Activated CD4-positive, alpha-beta T cell treated with anti-CD3 and anti-CD28 coated beads for 36 hours (primary cell): ENCODE measurements at regions of chr15 and their contacts with region 1.

Region 1: DNA sequence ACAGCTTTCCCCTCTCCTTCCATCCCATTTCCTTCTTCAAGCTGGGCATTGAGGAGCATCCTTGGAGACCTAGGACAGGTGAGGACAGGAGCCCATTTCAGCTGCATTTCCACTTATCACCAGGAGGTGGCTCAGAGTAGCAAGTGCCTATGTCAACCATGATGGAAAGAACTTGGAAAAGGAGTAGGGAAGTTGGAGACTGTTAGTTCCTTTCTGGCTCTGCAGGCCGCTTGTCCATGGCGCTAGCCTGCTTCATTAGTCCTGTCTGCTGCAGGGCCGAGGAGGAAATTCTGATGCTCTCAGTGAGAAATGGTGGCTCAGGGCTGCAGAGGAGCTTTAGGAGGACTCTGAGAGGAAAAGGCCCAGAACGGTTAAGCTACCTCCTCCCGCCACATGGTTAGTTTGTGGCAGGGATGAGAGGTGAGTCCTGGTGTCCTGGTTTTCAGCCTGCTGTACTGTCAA is 7.0 kb upstream of the CD276 start:
- DNase-seq: peak; percentile 68
- ATAC-seq: peak; percentile 49
- H3K4me3 Mint-ChIP-seq: no peak overlapping the region
- H3K27ac Mint-ChIP-seq: no peak overlapping the region
- H3K4me1 Mint-ChIP-seq: peaks cover 17% of the 10 kb centered on the region
- H3K27me3 Mint-ChIP-seq: peaks cover 33% of the 10 kb centered on the region

Region 2: GRCh38 chr15:73584699-73585420 is 92.3 kb before region 1 on chr15:
- CTCF ChIA-PET with region 1: no interaction called
- POLR2A ChIA-PET with region 1: no interaction called
- intact Hi-C with region 1: no loop called
- DNase-seq: no peak
- ATAC-seq: peak; percentile 29
- H3K4me3 Mint-ChIP-seq: no peak overlapping the region
- H3K27ac Mint-ChIP-seq: peak overlapping the region; percentile 33
- H3K4me1 Mint-ChIP-seq: peaks cover 10% of the 10 kb centered on the region
- H3K27me3 Mint-ChIP-seq: no peaks in the 10 kb centered on the region

Region 3: DNA sequence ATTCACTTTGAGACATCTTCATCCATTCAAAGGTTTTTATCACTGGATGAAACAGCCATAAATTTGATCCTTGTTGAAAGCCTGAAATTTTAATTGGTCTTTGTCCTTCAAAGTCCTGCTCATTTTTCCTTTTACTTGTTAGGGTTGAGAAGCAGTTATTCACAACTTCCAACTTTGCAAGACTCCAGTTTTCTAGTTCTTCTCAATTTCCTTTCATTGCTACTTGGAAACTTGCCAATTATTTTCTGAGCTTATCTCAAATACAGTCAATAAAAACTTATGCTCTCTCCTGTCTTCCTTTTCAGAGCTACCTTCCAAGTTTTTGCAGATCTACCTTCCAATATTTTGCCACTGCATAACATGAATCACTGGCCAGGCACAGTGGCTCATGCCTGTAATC is 16.7 kb before region 1 on chr15:
- CTCF ChIA-PET with region 1: interaction called, 16 read pairs
- POLR2A ChIA-PET with region 1: interaction called, 8 read pairs
- intact Hi-C with region 1: no loop called
- DNase-seq: no peak
- ATAC-seq: no peak
- H3K4me3 Mint-ChIP-seq: no peak overlapping the region
- H3K27ac Mint-ChIP-seq: no peak overlapping the region
- H3K4me1 Mint-ChIP-seq: peaks cover 3% of the 10 kb centered on the region
- H3K27me3 Mint-ChIP-seq: peaks cover 28% of the 10 kb centered on the region

Region 4: DNA sequence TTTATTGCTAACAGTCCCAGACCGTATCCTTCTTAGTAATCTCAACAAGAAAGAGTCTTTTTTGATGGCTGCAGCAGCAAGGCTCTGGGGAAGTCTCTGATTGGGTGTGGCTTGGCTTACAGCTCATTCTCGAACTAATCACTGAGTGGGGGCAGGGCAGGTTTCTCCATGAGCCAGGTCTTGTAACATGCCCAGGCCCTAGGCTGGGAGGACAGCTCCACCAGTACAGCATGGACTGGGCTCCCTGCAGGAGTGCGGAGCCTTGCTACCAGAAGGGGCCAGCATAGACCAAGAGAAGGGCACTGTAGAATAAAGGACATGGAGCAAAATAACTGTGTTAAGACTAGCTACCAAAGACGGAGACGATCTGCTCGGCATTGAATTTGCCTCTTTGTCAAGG is 14.2 kb after region 1 on chr15:
- CTCF ChIA-PET with region 1: interaction called, 16 read pairs
- POLR2A ChIA-PET with region 1: no interaction called
- intact Hi-C with region 1: no loop called
- DNase-seq: peak; percentile 33
- ATAC-seq: no peak
- H3K4me3 Mint-ChIP-seq: no peak overlapping the region
- H3K27ac Mint-ChIP-seq: no peak overlapping the region
- H3K4me1 Mint-ChIP-seq: peaks cover 8% of the 10 kb centered on the region
- H3K27me3 Mint-ChIP-seq: peaks cover 40% of the 10 kb centered on the region

Region 5: DNA sequence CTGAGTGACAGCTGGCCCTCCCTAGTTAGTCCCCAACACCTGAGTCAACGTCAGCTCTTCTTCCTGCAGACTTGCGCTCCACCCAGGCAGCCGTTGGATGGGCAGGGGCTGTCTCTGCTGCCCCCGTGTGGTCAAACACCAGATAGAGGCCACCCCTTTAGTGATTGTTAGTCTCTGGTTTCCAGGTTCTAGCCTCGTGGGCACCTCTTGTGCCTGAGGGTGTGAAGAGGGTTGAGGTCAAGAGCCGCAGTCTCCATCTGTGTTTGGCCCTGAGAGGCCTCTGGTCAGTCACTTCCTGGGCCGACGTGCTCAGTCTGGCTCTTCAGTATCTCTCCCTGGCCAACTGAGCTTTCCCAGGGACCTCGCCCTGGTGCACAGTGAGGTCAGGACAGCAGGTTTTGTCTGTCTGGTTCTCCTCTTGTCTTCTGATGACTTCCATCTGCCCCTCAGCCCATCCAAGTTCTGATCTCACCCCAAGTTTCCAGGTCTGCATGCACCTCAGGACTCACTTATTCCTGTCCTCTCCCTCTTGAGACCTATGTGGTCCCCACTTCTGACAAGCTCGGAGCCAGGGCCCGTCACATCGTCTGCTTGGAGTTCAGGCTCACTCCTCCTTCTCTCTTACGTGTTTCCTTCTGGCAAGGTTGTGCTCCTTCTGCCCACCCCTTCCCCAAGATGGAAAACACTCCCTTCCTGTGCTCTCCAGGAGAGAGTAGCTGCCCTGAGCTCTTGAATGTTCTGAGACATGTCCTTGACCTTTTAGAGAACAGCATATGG is 27.9 kb after region 1 on chr15:
- CTCF ChIA-PET with region 1: interaction called, 55 read pairs
- POLR2A ChIA-PET with region 1: no interaction called
- intact Hi-C with region 1: loop called (anchors 1 kb)
- DNase-seq: peak; percentile 83
- ATAC-seq: peak; percentile 85
- H3K4me3 Mint-ChIP-seq: no peak overlapping the region
- H3K27ac Mint-ChIP-seq: no peak overlapping the region
- H3K4me1 Mint-ChIP-seq: no peaks in the 10 kb centered on the region
- H3K27me3 Mint-ChIP-seq: peaks cover 3% of the 10 kb centered on the region

Region 6: GRCh38 chr15:73732930-73733329 is 55.8 kb after region 1 on chr15:
- CTCF ChIA-PET with region 1: no interaction called
- POLR2A ChIA-PET with region 1: no interaction called
- intact Hi-C with region 1: no loop called
- DNase-seq: no peak
- ATAC-seq: no peak
- H3K4me3 Mint-ChIP-seq: no peak overlapping the region
- H3K27ac Mint-ChIP-seq: no peak overlapping the region
- H3K4me1 Mint-ChIP-seq: no peaks in the 10 kb centered on the region
- H3K27me3 Mint-ChIP-seq: peaks cover 4% of the 10 kb centered on the region